PC-9 (cell line): ENCODE measurements at regions of chr1 and their contacts with region 1.

Region 1: GRCh38 chr1:58515794-58516401 is 30.6 kb downstream of the OMA1 start:
- DNase-seq: peak; percentile 25 to 61
- H3K4me3 ChIP-seq: no peak overlapping the region
- H3K27ac ChIP-seq: no peak overlapping the region
- H3K4me1 ChIP-seq: no peaks in the 10 kb centered on the region
- H3K27me3 ChIP-seq: no peaks in the 10 kb centered on the region
- CTCF ChIP-seq: peak; percentile 86

Region 2: DNA sequence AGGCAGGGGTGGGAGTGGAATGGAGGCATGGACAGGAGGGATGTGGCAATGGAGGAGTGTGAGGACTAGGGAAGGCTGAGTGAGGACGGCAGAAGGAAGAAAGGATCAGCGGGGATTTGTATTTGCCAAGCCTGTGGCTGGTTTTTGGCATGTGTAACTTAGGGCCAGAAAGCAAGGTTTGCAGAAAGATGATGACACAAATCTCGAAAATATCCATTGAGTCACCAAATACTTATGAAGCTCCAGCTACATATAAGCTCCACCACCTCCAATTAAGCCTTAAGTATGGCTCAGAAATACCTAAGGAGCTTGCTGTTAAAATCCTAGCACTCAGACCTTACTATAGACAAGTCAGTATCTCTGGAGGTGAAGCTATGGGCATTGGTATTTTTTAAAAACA is 59.4 kb before region 1 on chr1:
- CTCF ChIA-PET with region 1: no interaction called
- POLR2A ChIA-PET with region 1: no interaction called
- intact Hi-C with region 1: no loop called
- DNase-seq: no peak
- H3K4me3 ChIP-seq: no peak overlapping the region
- H3K27ac ChIP-seq: no peak overlapping the region
- H3K4me1 ChIP-seq: no peaks in the 10 kb centered on the region
- H3K27me3 ChIP-seq: no peaks in the 10 kb centered on the region
- CTCF ChIP-seq: no peak

Region 3: DNA sequence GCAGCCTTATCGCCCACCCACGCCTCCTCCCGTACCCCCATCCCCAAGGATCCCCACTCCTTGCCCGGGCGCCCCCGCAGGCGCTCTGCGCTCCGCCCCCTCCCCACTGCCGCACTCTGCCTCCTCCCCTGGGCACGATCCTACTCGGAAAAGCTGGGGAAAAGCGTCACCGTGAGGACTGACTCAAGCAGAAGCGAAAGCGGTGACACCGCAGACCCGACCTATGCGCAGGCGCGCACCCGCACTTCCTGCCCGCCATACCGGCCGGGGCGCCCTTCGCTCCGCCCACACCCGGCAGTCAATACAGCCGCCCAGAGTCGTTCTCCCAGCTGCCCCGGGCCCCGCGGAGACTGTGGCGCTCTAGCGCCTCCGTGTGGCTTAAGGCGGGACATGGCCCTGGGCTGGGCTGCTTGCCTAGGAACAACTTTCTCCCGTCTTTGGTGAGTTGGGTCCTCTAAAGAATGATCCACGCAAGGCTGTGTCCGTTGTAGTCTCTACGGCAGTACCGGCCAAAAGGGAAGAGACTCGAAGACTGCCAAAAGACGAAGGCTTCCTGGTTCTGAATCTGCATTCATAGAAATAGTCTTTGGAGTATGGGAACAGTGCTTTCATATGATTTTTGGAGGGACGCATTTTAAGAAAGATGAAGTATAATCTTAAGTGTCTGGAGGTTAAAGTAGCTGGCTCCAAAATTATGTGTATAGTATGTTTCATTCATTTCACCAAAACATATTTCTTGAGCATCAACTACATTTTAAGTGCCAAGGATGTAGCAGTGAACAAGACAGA is 30.8 kb after region 1 on chr1 and contains the start of gene OMA1:
- CTCF ChIA-PET with region 1: interaction called, 3 read pairs
- POLR2A ChIA-PET with region 1: no interaction called
- intact Hi-C with region 1: loop called (anchors 2 kb)
- DNase-seq: peak; percentile 85 to 98
- H3K4me3 ChIP-seq: peak within 1 kb of the TSS; percentile 85
- H3K27ac ChIP-seq: peak within 1 kb of the TSS; percentile 79
- H3K4me1 ChIP-seq: peaks cover 11% of the 10 kb centered on the region
- H3K27me3 ChIP-seq: no peaks in the 10 kb centered on the region
- CTCF ChIP-seq: peak; percentile 90
- total RNA-seq, gene OMA1: 27.9 and 29.0 TPM in 2 replicates